ENCODE measurements at regions of chr10 and their contacts with region 1.

Region 1: GRCh38 chr10:80205478-80206276 is at the start of gene ANXA11:
- DNase-seq: peak; percentile 91
- H3K4me3 ChIP-seq: peak within 1 kb of the TSS; percentile 79 to 95
- H3K27ac ChIP-seq: peak within 1 kb of the TSS; percentile 88 to 95
- H3K4me1 ChIP-seq: peaks cover 22% of the 10 kb centered on the region
- H3K27me3 ChIP-seq: no peaks in the 10 kb centered on the region
- CTCF ChIP-seq: peak in 1 of 3 experiments; percentile 6
- POLR2A ChIP-seq: peak; percentile 56
- total RNA-seq, gene ANXA11: 46.5 to 64.0 TPM

Region 2: DNA sequence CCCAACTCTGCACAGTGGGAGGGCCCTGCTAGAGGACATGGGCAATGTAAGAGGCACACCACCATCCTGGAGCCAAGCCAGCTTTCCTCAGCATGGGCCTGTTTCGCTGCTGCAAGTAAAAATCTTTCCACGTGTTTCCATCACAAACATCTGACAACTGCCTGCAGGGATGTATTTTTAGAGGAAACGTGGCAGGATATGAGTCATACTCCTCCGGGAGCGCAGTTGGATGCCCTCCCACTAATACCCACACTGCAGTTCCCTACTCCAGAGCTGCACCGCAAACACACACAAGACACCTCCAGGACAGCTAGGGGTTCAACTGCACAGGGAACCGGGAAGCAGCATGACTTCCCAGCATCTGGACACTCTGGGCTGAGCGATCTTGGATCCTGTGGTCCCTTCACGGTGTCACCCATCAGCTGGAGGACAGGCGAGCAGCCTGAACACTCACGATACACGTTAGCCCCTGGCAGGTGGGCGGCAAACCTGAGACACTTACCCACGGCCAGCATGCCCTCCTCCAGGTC is 47.0 kb before region 1 on chr10:
- intact Hi-C with region 1: loop called (anchors 10 kb)
- DNase-seq: peak; percentile 74
- H3K4me3 ChIP-seq: no peak overlapping the region
- H3K27ac ChIP-seq: peak overlapping the region in 1 of 2 donors; percentile 65
- H3K4me1 ChIP-seq: peaks cover 21% of the 10 kb centered on the region
- H3K27me3 ChIP-seq: no peaks in the 10 kb centered on the region
- CTCF ChIP-seq: no peak
- POLR2A ChIP-seq: no peak

Region 3: GRCh38 chr10:80296942-80297341 is 91.3 kb after region 1 on chr10:
- intact Hi-C with region 1: no loop called
- DNase-seq: no peak
- H3K4me3 ChIP-seq: no peak overlapping the region
- H3K27ac ChIP-seq: no peak overlapping the region
- H3K4me1 ChIP-seq: no peaks in the 10 kb centered on the region
- H3K27me3 ChIP-seq: no peaks in the 10 kb centered on the region
- CTCF ChIP-seq: no peak
- POLR2A ChIP-seq: no peak